CD4-positive, alpha-beta T cell (primary cell): ENCODE measurements at regions of chr15 and their contacts with region 1.

Region 1: DNA sequence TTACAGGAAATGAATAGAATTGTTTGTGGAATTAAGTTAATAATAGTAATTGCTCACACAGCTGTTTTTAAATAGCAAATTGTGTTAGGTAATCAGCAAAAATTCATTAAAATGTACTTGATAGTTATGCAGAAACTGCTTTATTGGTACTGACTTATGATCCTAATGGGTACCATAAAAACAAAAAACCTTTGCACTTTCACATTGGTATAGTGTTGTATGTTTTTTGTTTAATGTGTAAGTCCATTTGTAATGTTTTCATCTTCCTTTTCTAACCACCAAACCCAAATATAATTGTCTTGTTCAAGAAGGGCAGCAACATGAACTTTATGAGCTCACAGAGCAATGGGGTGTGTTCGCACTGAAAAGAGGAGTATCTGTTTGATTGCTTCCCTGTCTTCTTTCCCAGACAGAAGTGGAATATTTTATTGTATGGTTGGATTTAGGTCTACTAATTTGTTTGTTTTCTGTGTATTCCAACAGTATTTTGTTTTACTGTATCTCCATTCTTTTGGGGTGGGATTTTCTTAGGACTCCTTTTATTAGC is 135.8 kb downstream of the TCF12 start:
- DNase-seq: no peak
- ATAC-seq: no peak
- H3K4me3 ChIP-seq: no peak overlapping the region
- H3K4me3 Mint-ChIP-seq: no peak overlapping the region
- H3K27ac ChIP-seq: no peak overlapping the region
- H3K27ac Mint-ChIP-seq: no peak overlapping the region
- H3K4me1 ChIP-seq: peaks cover 5% of the 10 kb centered on the region
- H3K4me1 Mint-ChIP-seq: peaks cover 82% of the 10 kb centered on the region
- H3K27me3 ChIP-seq: no peaks in the 10 kb centered on the region
- H3K27me3 Mint-ChIP-seq: no peaks in the 10 kb centered on the region
- CTCF ChIP-seq: no peak

Region 2: DNA sequence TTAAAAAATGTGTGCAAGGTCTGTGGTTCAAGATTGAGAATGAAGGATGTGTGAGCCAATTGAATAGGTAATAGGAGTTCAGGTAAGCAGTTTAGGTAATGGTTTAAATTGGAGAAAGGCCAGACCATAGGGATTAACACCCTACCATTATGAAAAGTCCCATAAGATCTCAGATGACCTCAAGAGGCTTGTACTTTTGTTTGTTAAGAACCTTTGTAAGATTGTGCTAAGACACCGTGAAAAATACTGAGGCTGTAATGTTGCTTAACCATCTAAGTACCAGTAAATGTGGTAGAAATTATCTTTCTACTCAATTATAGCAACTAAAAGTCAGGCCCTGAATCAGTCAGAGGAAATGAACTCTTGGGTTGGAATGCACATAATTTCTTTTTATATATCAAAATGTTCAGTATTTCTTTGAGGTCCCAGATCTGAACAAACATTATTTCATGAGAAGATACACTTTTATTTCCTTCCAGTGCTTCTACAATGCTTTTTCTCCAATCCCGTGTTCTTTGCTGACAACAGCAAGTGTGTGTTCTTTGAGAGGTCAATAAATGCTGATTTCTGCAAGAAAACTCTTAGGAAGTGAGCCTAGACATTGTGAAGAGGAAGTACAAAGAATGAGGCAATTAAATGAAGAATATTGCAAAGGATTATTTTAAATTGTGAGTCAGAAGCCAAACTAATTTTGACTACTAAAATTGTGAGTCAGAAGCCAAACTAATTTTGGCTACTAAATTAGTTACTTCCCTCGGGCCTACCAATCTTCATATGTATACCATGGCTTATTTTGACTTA is 69.4 kb before region 1 on chr15:
- CTCF ChIA-PET with region 1: no interaction called
- POLR2A ChIA-PET with region 1: no interaction called
- intact Hi-C with region 1: no loop called
- DNase-seq: peak in 3 of 14 experiments; percentile 4 to 18 (median 11)
- ATAC-seq: no peak
- H3K4me3 ChIP-seq: no peak overlapping the region
- H3K4me3 Mint-ChIP-seq: no peak overlapping the region
- H3K27ac ChIP-seq: no peak overlapping the region
- H3K27ac Mint-ChIP-seq: peak overlapping the region; percentile 41
- H3K4me1 ChIP-seq: no peaks in the 10 kb centered on the region
- H3K4me1 Mint-ChIP-seq: peaks cover 86% of the 10 kb centered on the region
- H3K27me3 ChIP-seq: no peaks in the 10 kb centered on the region
- H3K27me3 Mint-ChIP-seq: no peaks in the 10 kb centered on the region
- CTCF ChIP-seq: no peak

Region 3: DNA sequence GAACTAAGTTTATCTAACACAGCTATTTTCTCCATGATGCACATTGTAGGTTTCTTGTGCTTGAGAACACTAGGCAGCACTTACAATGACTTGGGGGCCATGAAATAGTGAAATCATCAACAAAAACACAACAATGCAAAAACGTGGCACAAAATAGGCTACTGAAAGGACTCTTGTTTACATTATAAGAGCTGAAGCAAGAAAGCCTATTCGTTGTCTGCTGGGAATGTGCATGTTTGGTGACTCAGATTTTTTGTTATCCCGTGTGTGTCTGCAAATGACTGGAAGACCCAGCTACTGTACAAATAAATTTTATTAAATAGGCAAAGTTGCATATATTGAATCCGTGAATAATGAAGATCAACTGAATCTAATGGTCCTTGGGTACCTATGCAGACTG is 50.9 kb before region 1 on chr15:
- CTCF ChIA-PET with region 1: no interaction called
- POLR2A ChIA-PET with region 1: no interaction called
- intact Hi-C with region 1: loop called in 1 of 2 experiments (anchors 10 kb)
- DNase-seq: no peak
- ATAC-seq: no peak
- H3K4me3 ChIP-seq: no peak overlapping the region
- H3K4me3 Mint-ChIP-seq: no peak overlapping the region
- H3K27ac ChIP-seq: no peak overlapping the region
- H3K27ac Mint-ChIP-seq: no peak overlapping the region
- H3K4me1 ChIP-seq: no peaks in the 10 kb centered on the region
- H3K4me1 Mint-ChIP-seq: peaks cover 49% of the 10 kb centered on the region
- H3K27me3 ChIP-seq: no peaks in the 10 kb centered on the region
- H3K27me3 Mint-ChIP-seq: no peaks in the 10 kb centered on the region
- CTCF ChIP-seq: no peak